Activated CD8-positive, alpha-beta memory T cell treated with anti-CD3 and anti-CD28 coated beads, Interleukin-2, amount 10 ng/mL, durations not matched to agents 7 days and 5 days (primary cell): ENCODE measurements at regions of chr1 and their contacts with region 1.

Region 1: GRCh38 chr1:167617153-167618147 is 12.6 kb upstream of the RCSD1 start:
- DNase-seq: peak; percentile 59
- ATAC-seq: peak; percentile 72
- H3K4me3 Mint-ChIP-seq: peak overlapping the region; percentile 53
- H3K27ac Mint-ChIP-seq: peak overlapping the region; percentile 89
- H3K4me1 Mint-ChIP-seq: peaks cover 46% of the 10 kb centered on the region
- H3K27me3 Mint-ChIP-seq: no peaks in the 10 kb centered on the region

Region 2: DNA sequence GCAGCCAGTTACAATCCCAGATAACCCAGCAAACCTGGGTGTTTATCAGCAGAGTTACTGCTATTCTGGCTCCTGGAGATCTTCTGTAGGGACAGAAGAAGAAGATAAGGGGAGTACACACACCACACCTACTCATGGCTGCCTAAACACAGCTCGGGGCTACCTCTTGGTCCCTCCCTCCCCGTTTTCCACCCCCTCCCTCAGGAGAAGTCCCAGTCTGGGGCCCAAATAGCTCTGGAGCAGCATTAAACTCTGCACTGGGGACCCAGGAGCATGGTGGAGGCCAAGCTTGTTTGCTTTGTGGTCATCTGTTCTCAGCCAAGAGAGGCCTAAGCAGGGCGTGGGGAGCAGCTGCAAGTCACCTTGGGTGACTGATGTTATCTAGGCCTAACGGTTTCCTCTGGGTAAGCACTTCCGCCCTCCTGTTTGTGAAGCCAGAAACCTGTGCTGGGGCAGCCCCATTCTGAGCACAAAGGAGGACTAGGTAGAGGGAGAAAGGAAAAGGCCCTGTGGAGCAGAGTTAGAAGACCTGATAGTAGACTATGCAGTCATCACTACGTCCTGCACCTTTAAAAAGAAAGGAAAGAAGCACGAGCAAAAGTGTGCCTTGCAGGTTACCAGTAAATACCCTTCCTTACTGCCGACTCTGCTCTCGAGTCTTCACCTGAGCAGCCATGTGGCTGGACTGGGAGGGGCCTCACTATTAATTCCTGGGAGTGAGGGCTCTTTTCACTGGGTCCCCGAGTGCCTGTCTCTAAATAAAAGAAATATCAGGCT is 10.6 kb after region 1 on chr1:
- CTCF ChIA-PET with region 1: interaction called, 46 read pairs
- DNase-seq: peak; percentile 93
- ATAC-seq: peak; percentile 82
- H3K4me3 Mint-ChIP-seq: peak overlapping the region; percentile 83
- H3K27ac Mint-ChIP-seq: peak overlapping the region; percentile 98
- H3K4me1 Mint-ChIP-seq: peaks cover 55% of the 10 kb centered on the region
- H3K27me3 Mint-ChIP-seq: no peaks in the 10 kb centered on the region